ENCODE measurements at regions of chr10 and their contacts with region 1.

Region 1: DNA sequence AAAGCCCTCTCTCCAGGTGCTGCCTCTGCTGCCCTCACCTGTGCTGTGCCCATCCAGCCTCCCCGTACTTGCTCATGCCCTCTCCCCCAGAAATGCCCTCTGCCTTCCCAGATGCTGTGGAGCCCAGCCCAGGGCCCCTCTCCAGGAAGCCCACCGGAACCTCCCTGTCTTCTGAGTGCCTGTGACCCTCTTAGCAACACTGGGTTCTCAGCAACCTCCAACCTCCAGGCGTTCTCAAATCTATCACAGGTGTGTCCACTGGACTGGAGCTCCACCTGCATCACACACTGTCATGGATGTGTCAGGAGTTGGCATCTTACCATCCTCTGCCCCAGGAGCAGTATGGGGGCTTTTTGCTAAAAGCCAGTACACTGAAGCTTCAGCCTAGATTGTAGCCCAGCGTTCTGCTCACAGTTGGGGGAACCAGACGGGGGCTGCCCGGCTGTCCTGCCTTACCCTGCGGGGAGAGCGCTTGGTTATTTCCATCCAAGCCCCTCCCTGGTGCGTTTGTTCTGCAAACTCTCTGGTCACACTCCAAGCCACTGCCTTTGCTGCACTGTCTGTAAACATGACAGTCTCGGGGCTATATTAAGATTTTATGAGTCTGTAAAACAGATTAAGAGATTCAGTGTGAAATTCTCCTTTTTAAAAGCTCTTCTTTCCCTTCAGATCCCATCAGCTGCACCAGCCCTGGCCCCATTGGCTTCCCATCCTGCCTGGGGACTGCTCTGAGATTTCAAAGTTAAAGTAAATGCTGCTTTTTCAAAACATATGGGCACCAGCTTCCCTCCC is 71.3 kb upstream of the CPXM2 start:
- DNase-seq: no peak

Region 2: DNA sequence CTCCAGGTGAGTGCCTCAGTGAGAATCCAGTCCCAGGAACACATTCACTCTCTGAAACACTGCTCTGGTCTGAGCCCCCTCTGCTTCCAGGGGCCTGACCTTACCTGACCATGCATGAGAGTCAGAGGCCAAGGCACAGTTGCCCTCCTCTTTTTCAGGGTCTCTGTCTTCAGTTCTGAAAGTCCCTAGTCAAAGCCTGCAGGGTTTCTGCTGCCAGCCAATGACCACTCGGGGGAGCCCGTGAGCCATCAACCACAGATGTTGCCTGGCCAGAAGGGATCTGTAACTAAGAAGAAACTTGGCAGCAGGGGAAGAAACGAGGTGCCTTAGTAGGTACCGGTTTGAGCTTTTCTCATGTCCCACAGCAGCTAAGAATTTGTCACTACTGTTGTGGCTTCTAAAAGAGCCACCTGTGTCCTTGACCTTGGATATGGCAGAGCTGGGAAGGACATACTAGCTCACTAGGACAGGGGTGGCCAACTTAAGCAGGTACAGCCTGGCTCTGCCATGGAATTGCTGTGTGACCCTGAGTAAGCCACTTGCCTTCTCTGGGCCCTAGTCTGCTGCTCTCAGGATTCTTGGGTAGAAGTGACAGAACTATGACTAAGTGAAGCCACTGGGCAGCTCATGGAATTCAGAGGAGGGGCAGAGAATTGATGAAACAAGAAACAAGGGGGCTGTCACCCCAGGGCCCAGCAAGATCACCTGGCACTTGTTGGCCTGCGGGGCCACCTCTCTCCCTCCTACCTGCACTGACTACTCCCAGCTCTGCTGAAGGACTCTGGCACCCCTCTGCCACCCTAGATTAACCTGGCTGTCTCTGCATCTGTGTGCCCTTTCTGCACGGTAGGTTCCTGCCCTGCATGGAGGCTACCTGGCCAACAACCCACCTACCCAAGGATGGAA is 380.6 kb before region 1 on chr10:
- CTCF ChIA-PET with region 1: interaction called, 11 read pairs
- POLR2A ChIA-PET with region 1: no interaction called
- DNase-seq: peak; percentile 82

Measured in HEK293T (cell line).